BJ (cell line): ENCODE measurements at regions of chr1 and their contacts with region 1.

Region 1: GRCh38 chr1:160085686-160086455 is 4.5 kb downstream of the KCNJ9 start:
- DNase-seq: no peak
- H3K4me3 ChIP-seq: no peak overlapping the region
- H3K27me3 ChIP-seq: peaks cover 20% of the 10 kb centered on the region
- CTCF ChIP-seq: peak; percentile 91

Region 2: DNA sequence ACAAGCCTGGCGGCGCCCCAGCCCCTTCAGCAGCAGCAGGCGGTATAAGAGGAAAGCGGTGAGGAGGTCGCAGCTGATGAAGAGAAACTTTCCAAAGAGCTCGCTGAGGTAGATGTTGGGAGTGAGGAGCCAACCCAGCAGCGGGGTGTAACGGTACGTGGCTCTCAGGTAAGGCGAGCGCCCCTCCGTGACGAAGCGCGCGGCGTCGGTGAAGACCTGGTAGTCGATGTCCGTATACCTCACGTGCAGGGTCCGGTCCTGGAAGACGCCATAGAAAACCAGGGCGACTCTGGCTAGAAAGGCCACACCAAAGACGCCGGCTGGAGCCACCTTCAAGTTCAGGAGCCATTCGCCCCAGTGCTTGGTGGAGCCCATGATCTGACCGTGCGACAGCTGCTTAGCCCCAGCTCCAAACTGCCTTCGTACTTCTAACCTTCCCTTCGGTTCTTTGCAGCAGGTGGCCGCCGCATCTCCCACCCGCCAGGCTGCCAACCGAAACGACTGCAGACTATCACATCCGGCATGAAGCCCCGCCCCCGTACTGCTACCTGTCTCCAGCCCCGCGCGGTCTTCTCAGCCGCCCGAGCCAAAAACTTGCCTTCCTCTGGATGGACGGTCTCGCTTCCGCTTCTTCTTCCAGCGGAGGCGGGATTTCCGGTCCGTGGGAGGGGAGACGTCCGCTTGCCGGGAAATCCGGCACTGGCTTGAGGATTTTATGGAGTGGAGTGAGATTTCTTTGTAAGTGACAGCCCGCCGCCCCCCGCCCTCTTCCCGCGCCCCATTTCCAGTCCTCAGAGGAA is 54.3 kb before region 1 on chr1 and contains the start of gene PIGM:
- CTCF ChIA-PET with region 1: interaction called, 13 read pairs
- POLR2A ChIA-PET with region 1: no interaction called
- DNase-seq: peak; percentile 36
- H3K4me3 ChIP-seq: peak within 1 kb of the TSS; percentile 55
- H3K27me3 ChIP-seq: no peaks in the 10 kb centered on the region
- CTCF ChIP-seq: no peak
- polyA plus RNA-seq, gene PIGM: 3.5 and 4.8 TPM in 2 replicates

Region 3: DNA sequence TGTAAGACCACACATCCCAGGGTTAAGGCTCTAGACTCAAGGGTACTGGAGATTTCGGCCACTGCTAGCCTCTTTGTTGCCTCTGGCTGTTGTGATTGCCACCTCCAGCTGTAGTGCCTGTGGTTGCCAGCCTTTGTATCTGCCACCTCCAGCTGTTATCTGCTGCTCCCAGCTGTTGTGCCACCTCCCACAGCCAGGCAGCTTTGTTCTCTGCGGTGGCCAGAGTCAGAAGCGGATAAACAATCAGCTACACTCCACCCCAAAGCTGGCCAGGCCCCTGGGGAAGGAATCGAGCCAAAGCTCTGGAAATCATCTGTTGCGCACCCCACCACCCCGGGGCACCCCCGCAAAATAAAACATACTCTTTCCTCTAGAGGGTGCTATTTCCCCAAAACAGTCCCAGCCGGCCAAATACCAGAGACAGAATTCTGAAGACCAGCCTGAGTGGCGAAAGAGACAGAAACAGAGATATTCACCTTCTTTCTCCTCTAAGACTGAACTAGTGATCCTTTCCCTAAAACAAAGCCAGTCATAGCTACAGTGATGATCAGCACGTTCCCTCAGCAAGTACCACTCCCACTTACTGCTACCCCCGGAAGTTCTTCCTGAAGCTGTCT is 39.3 kb before region 1 on chr1:
- CTCF ChIA-PET with region 1: interaction called, 74 read pairs
- POLR2A ChIA-PET with region 1: no interaction called
- DNase-seq: no peak
- H3K4me3 ChIP-seq: no peak overlapping the region
- H3K27me3 ChIP-seq: peaks cover 11% of the 10 kb centered on the region
- CTCF ChIP-seq: peak; percentile 60

Region 4: GRCh38 chr1:160070243-160071163 is 15.4 kb before region 1 on chr1:
- CTCF ChIA-PET with region 1: interaction called, 62 read pairs
- POLR2A ChIA-PET with region 1: interaction called, 4 read pairs
- DNase-seq: no peak
- H3K4me3 ChIP-seq: peak overlapping the region; percentile 42
- H3K27me3 ChIP-seq: peaks cover 33% of the 10 kb centered on the region
- CTCF ChIP-seq: 0 out of 2 replicates have a peak, but pooled peaks have one; percentile 4

Region 5: DNA sequence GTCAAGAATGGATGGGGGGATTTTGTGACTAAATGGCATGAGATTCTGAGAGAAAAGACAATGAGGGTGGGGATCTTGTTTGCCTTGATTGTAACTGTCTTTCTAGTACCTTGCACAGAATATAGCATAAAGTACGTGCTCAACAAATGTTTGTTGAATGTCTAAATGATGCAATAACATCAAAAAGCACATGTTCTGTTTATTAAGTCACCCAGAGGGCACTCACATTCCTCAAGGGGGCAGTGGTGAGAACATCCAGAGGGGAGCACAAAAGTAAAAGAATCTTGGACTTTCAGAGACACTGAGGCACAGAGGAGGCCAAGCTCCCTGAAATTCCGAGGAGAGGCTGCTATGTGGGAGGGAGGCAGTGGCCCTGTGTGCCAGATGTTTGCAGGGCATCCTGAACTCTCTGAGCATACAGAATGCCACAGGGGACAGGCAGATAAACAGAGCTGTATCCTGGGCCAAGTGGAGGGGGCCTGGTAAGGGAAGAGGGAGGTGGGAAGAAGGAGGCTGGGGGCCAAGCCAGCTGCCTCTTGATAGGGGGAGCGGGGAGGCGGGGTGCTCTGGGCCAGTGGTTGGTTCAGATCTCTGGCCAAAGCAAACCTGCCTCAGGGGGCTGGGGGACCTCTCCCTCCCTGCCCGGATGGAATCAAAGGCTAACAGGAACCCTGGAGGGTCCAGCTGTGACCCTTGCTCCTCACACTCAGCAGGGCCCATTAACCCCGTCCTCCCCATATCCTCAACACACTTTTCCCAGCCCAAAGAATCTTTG is 23.2 kb after region 1 on chr1:
- CTCF ChIA-PET with region 1: no interaction called
- POLR2A ChIA-PET with region 1: no interaction called
- DNase-seq: no peak
- H3K4me3 ChIP-seq: no peak overlapping the region
- H3K27me3 ChIP-seq: peaks cover 3% of the 10 kb centered on the region
- CTCF ChIP-seq: peak; percentile 58

Region 6: GRCh38 chr1:160219062-160219929 is 133.4 kb after region 1 on chr1:
- CTCF ChIA-PET with region 1: interaction called, 23 read pairs
- POLR2A ChIA-PET with region 1: no interaction called
- DNase-seq: peak; percentile 50
- H3K4me3 ChIP-seq: no peak overlapping the region
- H3K27me3 ChIP-seq: no peaks in the 10 kb centered on the region
- CTCF ChIP-seq: peak; percentile 74

Region 7: GRCh38 chr1:160284782-160285344 is 199.0 kb after region 1 on chr1 and contains the start of gene PEX19:
- CTCF ChIA-PET with region 1: interaction called, 10 read pairs
- POLR2A ChIA-PET with region 1: no interaction called
- DNase-seq: peak; percentile 60
- H3K4me3 ChIP-seq: peak within 1 kb of the TSS; percentile 87
- H3K27me3 ChIP-seq: no peaks in the 10 kb centered on the region
- CTCF ChIP-seq: no peak
- polyA plus RNA-seq, gene PEX19: 52.6 and 69.1 TPM in 2 replicates

Region 8: DNA sequence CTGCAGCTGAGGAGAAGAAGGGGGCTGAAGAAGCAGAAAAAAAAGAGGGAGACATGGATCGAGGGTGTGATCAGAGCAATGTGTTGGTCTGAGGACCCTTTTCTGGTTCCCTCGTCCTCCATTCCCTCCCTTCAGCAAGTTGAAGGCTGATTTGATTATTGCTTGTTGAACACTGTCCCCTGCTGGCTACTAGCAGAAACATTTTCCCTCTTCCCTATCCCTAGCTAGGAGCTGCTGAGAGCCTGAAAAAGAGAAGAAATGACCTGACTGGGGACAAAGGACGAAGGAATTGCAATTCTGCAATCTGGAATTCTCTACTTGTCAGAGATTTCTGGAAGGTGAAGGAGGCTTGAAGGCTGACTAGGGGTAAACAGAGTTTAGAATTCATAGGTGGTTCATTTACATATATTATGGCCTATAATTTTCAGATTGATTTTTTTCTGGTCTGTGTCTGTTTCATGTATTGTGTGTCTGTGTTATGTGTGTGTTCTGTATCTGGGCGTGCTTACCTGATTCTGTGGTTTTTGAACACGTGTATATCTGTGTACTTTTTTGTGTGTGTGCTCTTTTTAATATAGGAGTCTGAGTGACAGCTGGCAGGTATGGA is 290.8 kb after region 1 on chr1:
- CTCF ChIA-PET with region 1: interaction called, 18 read pairs
- POLR2A ChIA-PET with region 1: no interaction called
- DNase-seq: no peak
- H3K4me3 ChIP-seq: no peak overlapping the region
- H3K27me3 ChIP-seq: no peaks in the 10 kb centered on the region; the same call in 1 of the 2 replicates
- CTCF ChIP-seq: peak; percentile 97